T-cell (primary cell): ENCODE measurements at regions of chr4 and their contacts with region 1.

Region 1: GRCh38 chr4:174069848-174070330 is 213.6 kb downstream of the FBXO8 start:
- DNase-seq: no peak
- ATAC-seq: no peak
- H3K4me3 ChIP-seq: no peak overlapping the region
- H3K4me3 Mint-ChIP-seq: no peak overlapping the region
- H3K27ac ChIP-seq: no peak overlapping the region
- H3K27ac Mint-ChIP-seq: no peak overlapping the region
- H3K4me1 ChIP-seq: no peaks in the 10 kb centered on the region
- H3K4me1 Mint-ChIP-seq: no peaks in the 10 kb centered on the region
- H3K27me3 ChIP-seq: no peaks in the 10 kb centered on the region
- H3K27me3 Mint-ChIP-seq: peaks cover 0 to 9% of the 10 kb centered on the region in 2 donors

Region 2: DNA sequence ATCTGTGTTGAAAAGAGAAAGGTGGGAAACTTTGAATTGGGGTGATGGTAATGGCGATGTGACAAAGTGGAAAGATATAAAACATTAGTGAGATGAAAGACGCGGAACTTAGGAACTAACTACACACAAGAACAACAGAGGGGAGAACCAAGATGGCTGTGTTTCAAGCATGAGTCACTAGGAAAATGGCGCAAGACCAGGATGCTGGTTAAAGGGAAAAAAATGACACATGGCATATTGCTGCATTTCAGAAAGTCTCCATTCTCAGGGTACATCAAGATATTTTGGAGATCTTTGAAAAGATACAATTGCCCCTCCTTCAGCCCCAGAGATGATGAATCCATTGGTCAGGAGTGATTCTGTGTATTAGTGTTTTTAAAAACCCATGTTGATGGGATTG is 49.2 kb after region 1 on chr4:
- CTCF ChIA-PET with region 1: interaction called in 1 of 2 experiments, 14 read pairs
- POLR2A ChIA-PET with region 1: no interaction called
- DNase-seq: no peak
- ATAC-seq: no peak
- H3K4me3 ChIP-seq: no peak overlapping the region
- H3K4me3 Mint-ChIP-seq: no peak overlapping the region
- H3K27ac ChIP-seq: no peak overlapping the region
- H3K27ac Mint-ChIP-seq: no peak overlapping the region
- H3K4me1 ChIP-seq: peaks cover 0 to 2% of the 10 kb centered on the region in 2 experiments
- H3K4me1 Mint-ChIP-seq: peaks cover 5 to 6% (median 5%) of the 10 kb centered on the region in 3 donors
- H3K27me3 ChIP-seq: peaks cover 8 to 9% of the 10 kb centered on the region in 2 experiments
- H3K27me3 Mint-ChIP-seq: peaks cover 32 to 46% of the 10 kb centered on the region in 2 donors